ENCODE measurements at regions of chr7 and their contacts with region 1.

Region 1: DNA sequence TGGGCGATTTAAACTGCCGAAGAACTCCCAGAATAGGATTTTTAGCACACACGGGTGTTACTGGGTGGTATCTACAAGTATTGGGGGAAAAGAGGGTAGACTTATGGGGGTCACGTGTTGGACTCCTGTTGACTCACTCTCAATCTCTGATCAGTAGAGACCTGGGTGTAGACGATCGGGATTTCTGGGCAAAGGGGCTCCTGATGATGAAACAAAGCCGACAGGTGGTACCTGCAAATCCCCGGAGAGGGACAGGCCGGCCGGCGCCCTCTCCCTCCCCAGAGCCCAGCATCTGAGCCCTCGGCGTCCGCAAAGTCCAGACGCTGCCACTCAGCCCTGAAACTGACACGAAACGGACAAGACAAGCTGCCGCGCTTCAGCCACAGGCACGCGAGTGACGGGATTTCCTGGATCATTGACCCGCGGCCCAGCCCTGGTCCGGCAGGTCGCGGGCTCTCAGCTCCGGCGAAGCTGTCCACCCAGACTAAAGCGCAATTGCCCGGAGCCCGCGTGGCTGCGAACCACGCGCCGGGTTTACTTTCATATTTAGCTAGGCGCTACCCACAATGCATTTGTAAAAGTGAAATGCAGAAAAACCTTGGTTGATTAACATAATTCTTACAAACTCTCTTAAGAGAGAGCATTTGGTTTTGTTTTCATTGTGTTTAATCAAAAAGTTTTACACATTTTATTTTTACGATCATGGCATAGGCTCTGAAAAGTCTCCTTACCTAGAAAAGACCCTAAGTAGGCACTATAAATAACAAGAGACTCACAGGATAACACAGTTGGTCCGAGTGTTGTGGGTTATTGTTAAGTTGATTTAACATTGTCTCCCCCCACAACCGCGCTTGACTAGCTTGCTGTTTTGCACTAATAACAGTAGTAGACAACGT is 56.9 kb upstream of the EZH2 start:
- DNase-seq: peak; percentile 90
- H3K4me3 ChIP-seq: peak overlapping the region; percentile 57 to 84 (median 73)
- H3K27ac ChIP-seq: peak overlapping the region; percentile 82 to 91 (median 86)
- H3K4me1 ChIP-seq: peaks cover 0 to 20% (median 7%) of the 10 kb centered on the region in 4 donors
- H3K27me3 ChIP-seq: no peaks in the 10 kb centered on the region
- CTCF ChIP-seq: no peak
- EP300 ChIP-seq: peak in 1 of 4 donors; percentile 4
- POLR2A ChIP-seq: no peak

Region 2: GRCh38 chr7:148987010-148987750 is 46.2 kb after region 1 on chr7:
- intact Hi-C with region 1: loop called (anchors 2 kb)
- DNase-seq: peak; percentile 94
- H3K4me3 ChIP-seq: peak overlapping the region; percentile 59 to 65 (median 64)
- H3K27ac ChIP-seq: peak overlapping the region; percentile 82 to 89 (median 84)
- H3K4me1 ChIP-seq: peaks cover 0 to 36% (median 28%) of the 10 kb centered on the region in 4 donors
- H3K27me3 ChIP-seq: no peaks in the 10 kb centered on the region
- CTCF ChIP-seq: no peak
- EP300 ChIP-seq: no peak
- POLR2A ChIP-seq: no peak